CD4-positive, alpha-beta T cell (primary cell): ENCODE measurements at regions of chr2 and their contacts with region 1.

Region 1: DNA sequence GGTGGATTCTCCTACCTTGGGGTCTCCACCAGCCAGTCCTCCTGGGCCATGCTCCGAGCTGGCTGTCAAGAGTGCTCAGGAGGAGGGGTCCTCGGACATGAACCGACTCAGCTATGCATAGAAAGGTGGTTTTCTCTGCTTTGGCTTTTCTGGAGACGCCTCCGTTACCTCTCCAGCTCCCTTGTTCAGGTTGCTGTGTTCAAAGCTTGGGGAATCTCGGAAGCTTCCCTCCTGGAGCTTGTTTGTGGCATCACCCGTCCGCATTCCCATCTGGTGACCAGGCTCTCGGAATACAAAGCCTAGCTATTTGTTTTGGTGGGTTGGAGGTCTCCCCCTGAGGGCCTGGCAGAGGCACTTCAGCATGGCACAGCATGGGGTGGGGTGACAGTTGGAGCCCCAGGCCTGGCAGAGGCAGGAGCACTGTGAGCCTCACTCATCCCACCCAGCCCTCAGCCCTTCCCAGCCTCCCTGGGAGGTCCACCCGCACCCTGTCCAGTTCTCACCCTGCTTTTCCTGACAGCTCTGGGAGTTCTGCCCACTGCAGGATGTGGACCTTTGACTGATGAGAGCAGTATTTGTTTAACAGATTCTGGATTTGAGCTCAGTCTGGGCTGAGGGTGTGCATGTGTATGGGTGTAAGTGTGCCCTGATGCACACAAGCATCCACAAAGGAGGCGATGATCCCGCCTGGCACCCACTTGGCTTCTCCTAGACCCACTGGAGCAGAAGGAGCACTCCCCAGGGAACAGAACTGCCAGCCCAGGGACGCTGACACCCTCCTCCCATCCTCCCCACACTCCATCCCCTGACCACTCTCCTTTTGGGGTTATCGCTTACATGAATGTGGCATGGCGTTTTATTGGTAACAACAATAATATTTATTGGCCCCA is 107.3 kb upstream of the HS6ST1 start:
- DNase-seq: peak in 1 of 14 experiments; percentile 20
- ATAC-seq: no peak
- H3K4me3 ChIP-seq: no peak overlapping the region
- H3K4me3 Mint-ChIP-seq: no peak overlapping the region
- H3K27ac ChIP-seq: no peak overlapping the region
- H3K27ac Mint-ChIP-seq: no peak overlapping the region
- H3K4me1 ChIP-seq: no peaks in the 10 kb centered on the region
- H3K4me1 Mint-ChIP-seq: no peaks in the 10 kb centered on the region
- H3K27me3 ChIP-seq: peaks cover 0 to 3% of the 10 kb centered on the region in 2 experiments
- H3K27me3 Mint-ChIP-seq: no peaks in the 10 kb centered on the region
- CTCF ChIP-seq: no peak

Region 2: DNA sequence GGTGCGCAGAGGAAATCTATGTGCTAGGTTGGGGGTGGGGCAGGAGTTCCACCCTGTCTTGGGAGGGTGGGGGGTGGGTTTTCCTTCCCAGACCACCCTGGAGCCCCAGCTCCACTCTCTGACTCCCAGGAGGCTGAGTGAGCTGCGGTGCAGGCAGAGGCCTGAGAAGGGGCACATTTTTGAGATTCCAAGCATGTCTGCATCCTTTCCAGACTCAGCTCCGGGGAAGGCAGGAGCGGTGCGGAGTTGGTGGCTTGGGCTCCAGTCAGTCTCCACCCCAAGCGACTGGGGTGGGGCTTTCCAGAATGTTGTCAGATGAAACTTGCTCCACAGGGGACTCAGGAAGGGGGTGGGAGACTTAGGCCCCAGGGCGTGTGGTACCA is 63.1 kb before region 1 on chr2:
- CTCF ChIA-PET with region 1: no interaction called
- POLR2A ChIA-PET with region 1: no interaction called
- intact Hi-C with region 1: loop called in 1 of 2 experiments (anchors 2 kb)
- DNase-seq: peak in 1 of 14 experiments; percentile 21
- ATAC-seq: no peak
- H3K4me3 ChIP-seq: no peak overlapping the region
- H3K4me3 Mint-ChIP-seq: no peak overlapping the region
- H3K27ac ChIP-seq: no peak overlapping the region
- H3K27ac Mint-ChIP-seq: no peak overlapping the region
- H3K4me1 ChIP-seq: no peaks in the 10 kb centered on the region
- H3K4me1 Mint-ChIP-seq: no peaks in the 10 kb centered on the region
- H3K27me3 ChIP-seq: no peaks in the 10 kb centered on the region
- H3K27me3 Mint-ChIP-seq: no peaks in the 10 kb centered on the region
- CTCF ChIP-seq: no peak

Region 3: DNA sequence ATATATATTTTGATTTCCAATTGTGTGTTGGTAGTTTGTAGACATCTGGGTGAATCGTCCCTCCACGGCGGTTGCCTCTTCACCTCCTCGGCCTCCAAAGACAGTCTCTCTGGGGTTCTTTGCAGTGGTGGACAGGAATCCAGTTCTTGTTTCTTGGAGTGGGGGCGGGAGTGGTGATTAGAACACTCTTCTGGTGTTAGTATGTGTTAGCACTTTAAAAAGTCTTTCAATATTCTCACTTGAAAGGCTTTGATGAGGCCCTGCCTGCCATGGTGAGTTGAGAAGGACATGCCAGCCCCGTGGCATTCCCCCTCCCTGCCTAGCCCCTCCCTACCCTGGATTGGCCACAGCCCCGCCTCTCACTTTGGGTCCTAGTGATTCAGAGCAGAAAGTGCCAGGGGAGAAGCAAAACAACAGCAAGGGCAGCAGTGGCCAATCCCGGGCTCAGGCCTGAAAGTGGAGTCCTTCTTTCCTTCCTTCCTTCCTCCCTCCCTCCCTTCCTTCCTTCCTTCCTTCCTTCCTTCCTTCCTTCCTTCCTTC is 209.5 kb after region 1 on chr2:
- CTCF ChIA-PET with region 1: no interaction called
- POLR2A ChIA-PET with region 1: no interaction called
- intact Hi-C with region 1: no loop called
- DNase-seq: peak in 1 of 14 experiments; percentile 10
- ATAC-seq: no peak
- H3K4me3 ChIP-seq: no peak overlapping the region
- H3K4me3 Mint-ChIP-seq: no peak overlapping the region
- H3K27ac ChIP-seq: no peak overlapping the region
- H3K27ac Mint-ChIP-seq: no peak overlapping the region
- H3K4me1 ChIP-seq: no peaks in the 10 kb centered on the region
- H3K4me1 Mint-ChIP-seq: no peaks in the 10 kb centered on the region
- H3K27me3 ChIP-seq: peaks cover 0 to 4% of the 10 kb centered on the region in 2 experiments
- H3K27me3 Mint-ChIP-seq: no peaks in the 10 kb centered on the region
- CTCF ChIP-seq: no peak